ENCODE measurements at regions of chr20 and their contacts with region 1.

Region 1: DNA sequence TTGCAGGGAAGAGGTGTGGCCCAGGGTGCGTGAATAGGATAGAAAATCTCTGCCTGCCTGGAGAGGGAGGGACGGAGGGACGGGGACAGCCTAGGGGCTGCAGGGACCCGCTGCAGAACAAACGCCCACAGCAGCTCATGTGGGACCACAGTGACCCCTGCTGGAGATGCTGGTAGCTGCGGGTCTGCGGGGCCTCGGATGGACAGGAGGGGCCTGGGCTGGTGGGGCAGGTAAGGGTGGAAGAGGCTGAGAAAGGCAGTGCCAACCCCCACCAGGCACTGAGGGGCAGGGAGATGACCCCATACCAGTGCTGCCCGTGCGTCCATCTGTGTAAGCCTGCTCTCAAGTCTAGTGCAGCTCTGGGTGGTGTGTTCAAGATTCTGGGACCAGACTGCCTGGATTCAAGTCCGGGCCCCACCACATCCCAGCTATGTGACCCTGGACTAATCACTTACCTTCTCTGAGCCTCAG is 39.4 kb downstream of the KIAA1755 start:
- DNase-seq: peak; percentile 35 to 66 (median 44)
- H3K4me3 ChIP-seq: no peak overlapping the region
- H3K4me3 Mint-ChIP-seq: no peak overlapping the region
- H3K27ac ChIP-seq: no peak overlapping the region
- H3K27ac Mint-ChIP-seq: no peak overlapping the region
- H3K4me1 ChIP-seq: no peaks in the 10 kb centered on the region
- H3K4me1 Mint-ChIP-seq: peaks cover 2 to 4% (median 4%) of the 10 kb centered on the region in 3 donors
- H3K27me3 ChIP-seq: no peaks in the 10 kb centered on the region
- H3K27me3 Mint-ChIP-seq: peaks cover 3 to 4% of the 10 kb centered on the region in 2 donors

Region 2: GRCh38 chr20:38057351-38057972 is 163.7 kb before region 1 on chr20:
- CTCF ChIA-PET with region 1: interaction called, 33 read pairs
- POLR2A ChIA-PET with region 1: no interaction called
- DNase-seq: peak; percentile 55 to 81 (median 74)
- H3K4me3 ChIP-seq: no peak overlapping the region
- H3K4me3 Mint-ChIP-seq: no peak overlapping the region
- H3K27ac ChIP-seq: no peak overlapping the region
- H3K27ac Mint-ChIP-seq: peak overlapping the region in 7 of 8 donors; percentile 13 to 85 (median 47)
- H3K4me1 ChIP-seq: no peaks in the 10 kb centered on the region
- H3K4me1 Mint-ChIP-seq: peaks cover 12 to 38% (median 21%) of the 10 kb centered on the region in 3 donors
- H3K27me3 ChIP-seq: no peaks in the 10 kb centered on the region
- H3K27me3 Mint-ChIP-seq: no peaks in the 10 kb centered on the region

Region 3: DNA sequence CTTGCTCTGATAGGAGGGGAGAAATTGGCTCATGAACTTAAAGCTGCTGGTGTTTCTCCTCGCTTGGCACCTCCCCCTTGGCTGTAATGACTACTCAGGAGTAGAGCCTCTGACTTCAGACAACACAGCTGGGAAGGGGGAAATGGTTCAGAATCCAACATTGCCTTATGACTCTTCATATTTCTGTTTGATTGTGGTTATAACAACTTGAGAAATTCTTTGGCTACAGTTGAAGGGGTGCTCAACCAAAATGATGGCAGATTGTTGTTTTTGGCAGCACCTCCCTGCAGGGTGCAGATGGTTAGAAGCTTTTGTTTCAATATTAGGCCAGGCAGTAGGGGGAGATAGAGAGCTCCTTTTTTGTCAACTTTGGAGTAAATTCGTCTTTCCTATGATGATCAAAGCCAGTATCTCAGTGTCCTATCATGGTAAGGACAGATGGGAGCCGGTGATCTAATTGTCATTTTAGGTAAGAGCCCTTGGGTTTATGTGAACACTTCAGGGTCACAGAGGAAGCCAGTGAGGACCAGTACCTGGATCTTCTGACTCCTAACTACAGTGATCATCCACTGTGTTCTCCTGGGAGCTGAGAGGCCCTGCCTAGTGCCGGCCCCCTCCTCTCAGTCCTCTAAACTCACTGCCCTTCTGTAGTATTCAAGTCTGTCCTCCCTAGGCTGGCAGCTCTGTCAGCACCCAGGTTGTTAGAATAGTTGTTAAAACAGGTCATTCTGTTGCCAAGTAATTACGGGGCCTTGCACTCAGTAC is 147.7 kb before region 1 on chr20:
- CTCF ChIA-PET with region 1: interaction called, 16 read pairs
- POLR2A ChIA-PET with region 1: no interaction called
- DNase-seq: peak in 1 of 5 donors; percentile 14
- H3K4me3 ChIP-seq: no peak overlapping the region
- H3K4me3 Mint-ChIP-seq: no peak overlapping the region
- H3K27ac ChIP-seq: no peak overlapping the region
- H3K27ac Mint-ChIP-seq: peak overlapping the region in 4 of 8 donors; percentile 0 to 71 (median 38)
- H3K4me1 ChIP-seq: no peaks in the 10 kb centered on the region
- H3K4me1 Mint-ChIP-seq: peaks cover 11 to 34% (median 30%) of the 10 kb centered on the region in 3 donors
- H3K27me3 ChIP-seq: no peaks in the 10 kb centered on the region
- H3K27me3 Mint-ChIP-seq: no peaks in the 10 kb centered on the region

Region 4: GRCh38 chr20:38210741-38211140 is 10.4 kb before region 1 on chr20:
- CTCF ChIA-PET with region 1: interaction called, 13 read pairs
- POLR2A ChIA-PET with region 1: no interaction called
- DNase-seq: no peak
- H3K4me3 ChIP-seq: no peak overlapping the region
- H3K4me3 Mint-ChIP-seq: no peak overlapping the region
- H3K27ac ChIP-seq: no peak overlapping the region
- H3K27ac Mint-ChIP-seq: peak overlapping the region in 1 of 8 donors; percentile 41
- H3K4me1 ChIP-seq: no peaks in the 10 kb centered on the region
- H3K4me1 Mint-ChIP-seq: no peaks in the 10 kb centered on the region
- H3K27me3 ChIP-seq: no peaks in the 10 kb centered on the region
- H3K27me3 Mint-ChIP-seq: peaks cover 11 to 14% of the 10 kb centered on the region in 2 donors

Region 5: DNA sequence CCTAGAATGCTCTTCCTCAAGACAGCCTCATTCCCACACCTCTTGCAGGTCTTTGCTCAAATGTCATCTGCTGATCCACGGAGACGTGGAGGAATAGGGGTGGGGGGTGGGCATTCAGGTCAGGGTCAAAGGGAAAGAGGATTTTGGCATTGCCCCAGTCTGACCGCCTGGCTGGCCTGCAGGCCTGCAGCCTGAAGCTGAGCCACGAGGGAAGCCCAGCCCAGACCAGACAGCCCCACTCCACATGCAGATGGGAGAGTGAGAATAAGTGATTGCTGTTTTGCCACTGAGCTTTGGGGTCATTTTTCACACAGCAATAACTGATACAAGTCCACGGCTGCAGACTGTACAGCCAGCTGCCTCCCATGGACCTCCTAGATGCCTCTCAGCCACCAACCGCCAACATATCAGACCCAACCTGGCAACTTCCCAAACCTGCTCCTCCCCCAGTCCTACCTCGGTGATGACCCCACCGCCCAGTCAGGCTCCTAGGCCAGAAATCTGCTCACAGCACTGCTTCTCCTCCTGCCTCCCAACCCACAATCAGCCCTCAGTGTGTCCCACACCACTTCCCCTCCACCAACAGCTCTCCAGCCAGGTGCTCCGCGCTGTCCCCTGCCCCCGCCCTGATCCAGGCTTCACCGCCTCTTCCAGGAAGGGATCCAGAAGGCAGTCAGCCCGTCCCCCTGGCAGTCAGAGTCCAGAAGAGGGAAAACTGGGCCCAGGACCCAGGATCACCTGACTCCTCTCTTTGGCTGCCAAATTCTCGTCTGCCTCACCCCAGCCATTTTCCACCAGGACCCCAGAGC is 25.4 kb after region 1 on chr20:
- CTCF ChIA-PET with region 1: no interaction called
- POLR2A ChIA-PET with region 1: no interaction called
- DNase-seq: no peak
- H3K4me3 ChIP-seq: no peak overlapping the region
- H3K4me3 Mint-ChIP-seq: no peak overlapping the region
- H3K27ac ChIP-seq: no peak overlapping the region
- H3K27ac Mint-ChIP-seq: no peak overlapping the region
- H3K4me1 ChIP-seq: no peaks in the 10 kb centered on the region
- H3K4me1 Mint-ChIP-seq: no peaks in the 10 kb centered on the region
- H3K27me3 ChIP-seq: no peaks in the 10 kb centered on the region
- H3K27me3 Mint-ChIP-seq: peaks cover 13 to 17% of the 10 kb centered on the region in 2 donors

Region 6: DNA sequence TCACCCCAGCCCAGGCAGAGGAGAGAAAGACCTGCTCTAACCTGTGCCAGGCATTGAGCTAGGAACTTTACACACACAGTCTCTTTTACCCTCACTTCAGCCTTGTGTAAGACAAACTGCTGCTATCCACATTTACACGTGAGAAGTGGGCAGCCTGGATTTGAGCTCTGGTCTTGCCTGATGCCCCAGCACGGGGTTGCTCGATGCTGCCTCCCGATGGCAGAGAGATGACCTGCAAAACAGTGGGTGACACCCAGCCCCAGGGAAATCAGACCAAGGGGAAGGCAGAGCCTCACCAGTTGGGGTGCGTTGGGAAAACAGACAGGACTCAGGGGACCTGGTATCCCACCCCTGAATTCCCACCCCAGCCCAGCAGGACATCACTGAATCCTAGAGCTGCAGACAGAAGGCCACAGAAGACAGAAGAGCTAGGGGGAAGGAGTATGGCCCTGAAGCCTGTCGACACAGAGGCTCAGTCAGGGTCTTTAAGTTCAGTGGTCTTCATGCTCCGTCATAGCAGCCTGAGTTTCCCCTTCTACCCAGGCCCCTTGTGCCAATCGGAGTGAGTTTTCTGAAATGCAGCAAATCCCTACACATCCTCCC is 83.8 kb after region 1 on chr20:
- CTCF ChIA-PET with region 1: no interaction called
- POLR2A ChIA-PET with region 1: no interaction called
- DNase-seq: no peak
- H3K4me3 ChIP-seq: no peak overlapping the region
- H3K4me3 Mint-ChIP-seq: no peak overlapping the region
- H3K27ac ChIP-seq: no peak overlapping the region
- H3K27ac Mint-ChIP-seq: no peak overlapping the region
- H3K4me1 ChIP-seq: no peaks in the 10 kb centered on the region
- H3K4me1 Mint-ChIP-seq: peaks cover 12 to 22% (median 16%) of the 10 kb centered on the region in 3 donors
- H3K27me3 ChIP-seq: peaks cover 13% of the 10 kb centered on the region
- H3K27me3 Mint-ChIP-seq: peaks cover 38 to 65% of the 10 kb centered on the region in 2 donors

Region 7: GRCh38 chr20:38387953-38388352 is 166.8 kb after region 1 on chr20:
- CTCF ChIA-PET with region 1: no interaction called
- POLR2A ChIA-PET with region 1: no interaction called
- DNase-seq: no peak
- H3K4me3 ChIP-seq: no peak overlapping the region
- H3K4me3 Mint-ChIP-seq: no peak overlapping the region
- H3K27ac ChIP-seq: no peak overlapping the region
- H3K27ac Mint-ChIP-seq: no peak overlapping the region
- H3K4me1 ChIP-seq: no peaks in the 10 kb centered on the region
- H3K4me1 Mint-ChIP-seq: no peaks in the 10 kb centered on the region
- H3K27me3 ChIP-seq: no peaks in the 10 kb centered on the region
- H3K27me3 Mint-ChIP-seq: peaks cover 6 to 43% of the 10 kb centered on the region in 2 donors

Measured in CD8-positive, alpha-beta memory T cell (primary cell).